IMR-90 (cell line): ENCODE measurements at regions of chr15 and their contacts with region 1.

Region 1: DNA sequence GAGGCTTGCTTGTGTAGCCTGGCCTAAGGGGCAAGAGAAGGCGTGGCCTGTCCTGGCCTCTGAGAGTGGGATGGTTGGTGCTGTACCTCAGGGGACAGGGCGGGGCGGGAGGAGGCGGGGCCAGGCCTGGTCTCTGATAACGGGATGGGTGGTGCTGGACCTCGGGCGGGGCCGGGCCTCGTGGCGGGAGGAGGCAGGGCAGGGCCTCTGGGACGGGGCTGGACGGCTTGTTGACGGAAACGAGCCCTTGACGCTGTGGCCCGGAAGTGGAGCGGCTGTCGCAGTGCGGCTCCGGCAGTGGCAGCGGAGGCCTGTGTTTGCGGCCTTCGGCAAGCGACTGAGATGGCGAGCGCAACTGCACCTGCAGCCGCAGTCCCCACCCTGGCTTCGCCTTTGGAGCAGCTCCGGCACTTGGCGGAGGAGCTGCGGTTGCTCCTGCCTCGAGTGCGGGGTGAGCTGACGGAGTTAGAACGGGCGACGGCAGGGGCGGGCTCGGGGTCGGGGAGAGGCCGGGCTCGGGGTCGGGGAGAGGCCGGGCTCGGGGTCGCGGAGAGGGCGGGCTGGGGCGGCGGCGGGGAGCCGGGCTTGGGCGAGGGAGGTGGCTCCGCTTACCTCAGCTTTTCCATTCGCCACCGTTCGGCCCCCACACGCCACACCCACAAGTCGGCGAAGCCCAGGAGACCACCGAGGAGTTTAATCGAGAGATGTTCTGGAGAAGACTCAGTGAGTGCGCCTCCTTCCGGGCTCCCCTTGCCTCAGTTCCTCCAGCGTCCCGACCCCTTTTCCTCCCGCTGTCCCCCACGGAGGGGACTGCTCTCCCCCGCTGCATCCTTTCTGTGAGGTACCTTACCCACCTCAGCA is at the start of gene CCNDBP1:
- DNase-seq: peak; percentile 61
- ATAC-seq: peak; percentile 98
- H3K4me3 ChIP-seq: peak within 1 kb of the TSS; percentile 85
- H3K27ac ChIP-seq: peak within 1 kb of the TSS; percentile 53; the same call in 1 of the 2 replicates
- H3K4me1 ChIP-seq: no peaks in the 10 kb centered on the region
- H3K27me3 ChIP-seq: no peaks in the 10 kb centered on the region
- CTCF ChIP-seq: peak; percentile 36
- POLR2A ChIP-seq: no peak
- RAD21 ChIP-seq: peak; percentile 11; the same call in 1 of the 2 replicates
- total RNA-seq, gene CCNDBP1: 33.9 and 40.3 TPM in 2 replicates

Region 2: DNA sequence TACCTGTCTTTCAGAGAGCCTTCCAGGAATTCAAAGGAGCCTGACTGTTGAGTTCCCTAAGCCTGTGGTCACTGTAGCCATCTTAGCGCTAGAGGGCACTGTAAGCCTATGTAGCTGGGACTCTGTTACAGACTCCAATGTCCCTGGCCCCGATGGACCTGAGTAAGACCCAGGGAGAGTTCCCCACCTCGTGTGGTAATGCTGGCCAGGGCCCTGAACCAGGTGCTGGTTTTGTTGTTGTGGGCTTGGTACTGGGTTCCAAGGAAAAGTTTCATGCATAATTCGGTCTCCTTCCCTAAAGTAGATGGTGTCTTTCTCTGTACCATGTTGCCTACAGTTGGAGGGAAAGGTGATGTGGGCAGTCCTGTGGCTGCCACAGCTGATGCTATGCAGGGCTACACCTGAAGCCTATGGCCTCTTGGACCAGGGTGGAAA is 480.9 kb before region 1 on chr15:
- CTCF ChIA-PET with region 1: no interaction called
- POLR2A ChIA-PET with region 1: no interaction called
- dilution Hi-C with region 1: no loop called
- in situ Hi-C with region 1: no loop called
- intact Hi-C with region 1: loop called (anchors 5 kb)
- DNase-seq: peak; percentile 73
- ATAC-seq: peak; percentile 100
- H3K4me3 ChIP-seq: no peak overlapping the region
- H3K27ac ChIP-seq: no peak overlapping the region
- H3K4me1 ChIP-seq: no peaks in the 10 kb centered on the region
- H3K27me3 ChIP-seq: no peaks in the 10 kb centered on the region
- CTCF ChIP-seq: peak; percentile 86
- POLR2A ChIP-seq: no peak
- RAD21 ChIP-seq: peak; percentile 94

Region 3: DNA sequence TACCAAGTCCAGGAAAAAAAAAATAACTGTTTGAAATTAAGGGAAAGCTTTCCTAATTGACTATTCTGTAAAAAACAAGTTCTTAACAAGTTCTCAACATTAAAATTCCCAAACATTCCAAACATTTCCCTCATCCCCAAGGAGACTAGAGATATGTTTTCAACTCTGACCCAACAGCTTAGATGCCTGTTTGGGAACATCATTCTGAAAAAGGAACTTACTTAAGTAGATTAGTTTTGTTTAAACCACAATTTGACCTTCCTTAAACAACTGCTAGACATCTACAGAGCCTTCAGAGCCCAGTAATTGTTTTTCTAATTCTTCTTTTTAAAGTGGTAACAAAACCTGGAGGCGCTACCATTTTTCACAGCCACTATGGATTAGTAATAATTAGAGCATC is 92.4 kb before region 1 on chr15:
- CTCF ChIA-PET with region 1: no interaction called
- POLR2A ChIA-PET with region 1: no interaction called
- dilution Hi-C with region 1: no loop called
- in situ Hi-C with region 1: no loop called
- intact Hi-C with region 1: loop called (anchors 10 kb)
- DNase-seq: peak; percentile 85
- ATAC-seq: peak; percentile 77
- H3K4me3 ChIP-seq: no peak overlapping the region
- H3K27ac ChIP-seq: peak overlapping the region; percentile 34; the same call in 1 of the 2 replicates
- H3K4me1 ChIP-seq: peaks cover 12% of the 10 kb centered on the region
- H3K27me3 ChIP-seq: no peaks in the 10 kb centered on the region
- CTCF ChIP-seq: no peak
- POLR2A ChIP-seq: no peak
- RAD21 ChIP-seq: no peak

Region 4: DNA sequence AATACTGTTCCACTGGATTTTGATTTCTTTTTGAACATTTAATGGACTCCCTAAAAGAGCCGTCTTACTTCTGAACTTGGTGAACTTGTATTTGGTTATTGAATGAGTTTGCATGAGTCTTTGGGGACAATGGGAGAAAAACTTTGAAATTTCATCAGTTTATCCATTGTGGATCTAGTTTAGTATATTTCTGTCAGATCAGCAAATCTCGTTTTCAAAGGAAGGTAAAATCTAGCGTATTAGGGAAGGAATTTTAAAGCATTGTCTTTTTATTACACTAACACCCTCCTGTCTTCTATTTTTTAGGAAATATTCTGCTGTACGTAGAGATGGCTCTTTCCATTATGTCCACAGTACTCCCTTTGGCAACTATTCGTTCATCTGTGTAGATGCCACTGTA is 39.2 kb before region 1 on chr15:
- CTCF ChIA-PET with region 1: no interaction called
- POLR2A ChIA-PET with region 1: no interaction called
- dilution Hi-C with region 1: no loop called
- in situ Hi-C with region 1: no loop called
- intact Hi-C with region 1: loop called (anchors 5 kb)
- DNase-seq: no peak
- ATAC-seq: no peak
- H3K4me3 ChIP-seq: no peak overlapping the region
- H3K27ac ChIP-seq: no peak overlapping the region
- H3K4me1 ChIP-seq: peaks cover 2% of the 10 kb centered on the region; the same call in 1 of the 2 replicates
- H3K27me3 ChIP-seq: no peaks in the 10 kb centered on the region
- CTCF ChIP-seq: no peak
- POLR2A ChIP-seq: no peak
- RAD21 ChIP-seq: no peak

Region 5: DNA sequence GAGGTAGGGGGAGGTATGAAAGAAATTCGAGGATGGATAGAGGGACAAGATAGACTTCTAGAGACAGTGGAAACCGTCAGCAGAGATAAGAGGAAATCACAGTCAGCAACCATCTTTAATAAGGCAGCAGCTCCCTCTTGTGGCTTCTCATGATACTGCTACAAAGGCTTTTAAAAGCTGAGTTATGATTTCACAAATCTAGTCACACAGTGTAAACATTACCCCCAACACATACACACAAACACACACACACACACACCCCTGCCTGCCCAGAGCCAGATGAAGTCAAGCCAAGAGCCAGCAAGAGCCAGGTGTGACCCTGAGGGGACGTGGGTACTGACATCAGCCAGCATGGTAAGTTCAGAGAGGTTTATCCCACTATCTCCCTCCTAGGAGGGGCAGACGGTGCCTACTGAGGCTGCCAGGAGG is 100.2 kb after region 1 on chr15:
- CTCF ChIA-PET with region 1: interaction called, 3 read pairs
- POLR2A ChIA-PET with region 1: no interaction called
- dilution Hi-C with region 1: no loop called
- in situ Hi-C with region 1: loop called (anchors 5 kb)
- intact Hi-C with region 1: loop called (anchors 1 kb)
- DNase-seq: peak; percentile 67
- ATAC-seq: peak; percentile 97
- H3K4me3 ChIP-seq: no peak overlapping the region
- H3K27ac ChIP-seq: no peak overlapping the region
- H3K4me1 ChIP-seq: peaks cover 1% of the 10 kb centered on the region; the same call in 1 of the 2 replicates
- H3K27me3 ChIP-seq: peaks cover 37% of the 10 kb centered on the region
- CTCF ChIP-seq: peak; percentile 96
- POLR2A ChIP-seq: no peak
- RAD21 ChIP-seq: peak; percentile 94